Activated CD4-positive, alpha-beta T cell treated with anti-CD3 and anti-CD28 coated beads, Interleukin-2, amount 10 ng/mL, durations not matched to agents 24 days and 14 days (primary cell): ENCODE measurements at regions of chr6 and their contacts with region 1.

Region 1: GRCh38 chr6:32413427-32414047 is 6.6 kb upstream of the BTNL2 start:
- DNase-seq: peak; percentile 94
- H3K4me3 Mint-ChIP-seq: no peak overlapping the region
- H3K27ac Mint-ChIP-seq: no peak overlapping the region
- H3K4me1 Mint-ChIP-seq: peaks cover 8% of the 10 kb centered on the region
- H3K27me3 Mint-ChIP-seq: peaks cover 52% of the 10 kb centered on the region

Region 2: GRCh38 chr6:32244946-32245398 is 168.6 kb before region 1 on chr6:
- intact Hi-C with region 1: loop called (anchors 5 kb)
- DNase-seq: peak; percentile 91
- H3K4me3 Mint-ChIP-seq: peak overlapping the region; percentile 44
- H3K27ac Mint-ChIP-seq: no peak overlapping the region
- H3K4me1 Mint-ChIP-seq: peaks cover 24% of the 10 kb centered on the region
- H3K27me3 Mint-ChIP-seq: peaks cover 27% of the 10 kb centered on the region

Region 3: DNA sequence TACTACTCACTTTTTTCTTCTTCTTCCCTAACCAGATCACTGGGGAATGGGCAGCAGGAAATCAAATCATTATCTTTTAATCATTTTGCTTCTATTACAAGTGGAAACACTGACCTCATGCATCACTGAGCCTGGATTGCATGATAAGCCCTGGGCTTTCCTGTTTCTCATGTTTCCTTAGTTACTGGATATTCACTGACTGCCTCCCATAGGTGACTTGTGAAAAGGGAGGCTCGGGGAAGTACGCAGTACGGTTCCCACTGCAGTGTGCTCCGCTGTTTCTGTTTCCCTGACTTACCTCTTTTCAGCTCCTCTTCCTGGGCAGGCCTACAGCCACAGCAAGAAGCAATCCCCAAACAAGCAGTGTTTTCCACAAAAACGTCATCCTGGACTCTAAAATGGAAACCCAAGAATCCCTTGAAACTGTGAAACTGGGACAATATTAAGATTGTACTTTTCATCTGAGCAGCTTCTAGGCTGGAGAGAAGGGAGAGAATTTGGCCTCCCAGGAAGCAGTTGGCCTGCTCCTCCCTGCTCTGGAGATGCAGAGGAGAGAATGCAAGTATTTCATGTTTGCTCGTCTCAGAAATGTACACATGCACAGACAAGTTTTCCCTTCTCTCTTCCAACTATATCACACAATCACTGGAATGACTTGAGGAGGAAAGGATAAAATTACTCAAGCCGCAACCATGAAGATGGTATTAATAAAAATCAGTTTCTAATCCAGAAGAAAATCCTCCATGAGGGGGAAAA is 19.7 kb before region 1 on chr6:
- intact Hi-C with region 1: no loop called
- DNase-seq: peak; percentile 46
- H3K4me3 Mint-ChIP-seq: no peak overlapping the region
- H3K27ac Mint-ChIP-seq: no peak overlapping the region
- H3K4me1 Mint-ChIP-seq: peaks cover 4% of the 10 kb centered on the region
- H3K27me3 Mint-ChIP-seq: peaks cover 31% of the 10 kb centered on the region

Region 4: DNA sequence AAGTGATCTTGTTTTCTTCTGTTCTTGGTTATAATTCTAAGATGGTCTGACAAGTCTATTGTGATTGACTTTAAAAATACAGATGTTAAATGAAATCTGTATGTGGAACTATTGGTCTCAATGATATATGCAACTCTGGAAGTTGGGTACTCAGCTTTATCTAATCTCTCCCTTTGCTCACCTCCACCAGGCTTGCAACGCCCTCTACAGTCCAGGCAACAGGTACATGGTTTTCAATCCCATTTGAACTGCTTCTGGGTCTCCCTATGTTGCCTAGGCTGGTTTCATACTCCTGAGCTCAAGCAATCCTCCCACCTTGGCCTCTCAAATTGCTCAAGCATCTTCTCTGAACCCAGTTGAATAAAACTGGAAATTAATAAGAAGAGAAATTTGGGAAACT is 278.5 kb after region 1 on chr6:
- intact Hi-C with region 1: loop called (anchors 2 kb)
- DNase-seq: peak; percentile 86
- H3K4me3 Mint-ChIP-seq: no peak overlapping the region
- H3K27ac Mint-ChIP-seq: no peak overlapping the region
- H3K4me1 Mint-ChIP-seq: peaks cover 12% of the 10 kb centered on the region
- H3K27me3 Mint-ChIP-seq: peaks cover 41% of the 10 kb centered on the region